Breast epithelium (tissue), 4 donors: ENCODE measurements at regions of chr10 and their contacts with region 1.

Region 1: GRCh38 chr10:125160856-125161706 is 718 bp upstream of the CTBP2 start:
- DNase-seq: peak; percentile 73 to 85
- H3K4me3 ChIP-seq: peak overlapping the region; percentile 87 to 97 (median 91)
- H3K27ac ChIP-seq: peak overlapping the region; percentile 99
- H3K4me1 ChIP-seq: peaks cover 4% of the 10 kb centered on the region in 2 donors
- H3K27me3 ChIP-seq: no peaks in the 10 kb centered on the region
- CTCF ChIP-seq: peak; percentile 17 to 39 (median 21)
- POLR2A ChIP-seq: no peak

Region 2: GRCh38 chr10:125060826-125061556 is 100.1 kb before region 1 on chr10:
- intact Hi-C with region 1: loop called (anchors 5 kb)
- DNase-seq: peak; percentile 84 to 85
- H3K4me3 ChIP-seq: peak overlapping the region in 2 of 3 donors; percentile 2 to 57
- H3K27ac ChIP-seq: peak overlapping the region; percentile 95 to 97
- H3K4me1 ChIP-seq: peaks cover 37 to 75% of the 10 kb centered on the region in 2 donors
- H3K27me3 ChIP-seq: no peaks in the 10 kb centered on the region
- CTCF ChIP-seq: peak; percentile 59 to 92 (median 90)
- POLR2A ChIP-seq: no peak

Region 3: GRCh38 chr10:125171402-125172306 is 10.6 kb after region 1 on chr10:
- intact Hi-C with region 1: no loop called
- DNase-seq: no peak
- H3K4me3 ChIP-seq: no peak overlapping the region
- H3K27ac ChIP-seq: no peak overlapping the region
- H3K4me1 ChIP-seq: no peaks in the 10 kb centered on the region
- H3K27me3 ChIP-seq: no peaks in the 10 kb centered on the region
- CTCF ChIP-seq: no peak
- POLR2A ChIP-seq: no peak

Region 4: DNA sequence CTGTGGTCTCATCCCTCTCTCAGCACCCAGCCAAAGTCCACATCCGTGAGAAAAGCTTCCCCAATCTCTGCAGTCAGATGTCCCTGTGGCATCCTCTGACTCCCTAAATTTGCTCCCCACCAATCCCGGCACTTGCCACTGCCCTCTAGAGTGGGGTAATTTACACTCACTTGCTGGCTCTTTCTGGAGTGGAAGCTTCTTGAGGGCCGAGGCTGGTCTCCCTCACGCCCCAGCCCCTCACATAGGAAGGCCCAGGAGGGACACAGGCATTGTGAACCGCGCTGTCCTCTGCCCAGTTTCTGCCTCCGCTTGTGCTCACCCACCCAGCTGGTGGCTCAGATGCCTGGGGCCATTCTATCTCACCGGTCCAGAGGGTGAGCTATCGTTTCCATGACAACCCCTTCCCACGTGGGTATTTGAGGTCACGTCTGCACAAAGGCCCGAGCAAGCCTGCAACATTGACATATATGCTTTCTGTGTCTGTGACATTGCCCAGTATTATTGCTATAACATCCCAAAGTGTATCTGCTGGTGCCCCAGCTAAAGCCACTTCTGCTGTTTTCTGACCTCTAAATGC is 96.5 kb after region 1 on chr10:
- intact Hi-C with region 1: loop called (anchors 5 kb)
- DNase-seq: no peak
- H3K4me3 ChIP-seq: no peak overlapping the region
- H3K27ac ChIP-seq: no peak overlapping the region
- H3K4me1 ChIP-seq: no peaks in the 10 kb centered on the region
- H3K27me3 ChIP-seq: no peaks in the 10 kb centered on the region
- CTCF ChIP-seq: no peak
- POLR2A ChIP-seq: no peak